ENCODE measurements at regions of chr6 and their contacts with region 1.

Region 1: DNA sequence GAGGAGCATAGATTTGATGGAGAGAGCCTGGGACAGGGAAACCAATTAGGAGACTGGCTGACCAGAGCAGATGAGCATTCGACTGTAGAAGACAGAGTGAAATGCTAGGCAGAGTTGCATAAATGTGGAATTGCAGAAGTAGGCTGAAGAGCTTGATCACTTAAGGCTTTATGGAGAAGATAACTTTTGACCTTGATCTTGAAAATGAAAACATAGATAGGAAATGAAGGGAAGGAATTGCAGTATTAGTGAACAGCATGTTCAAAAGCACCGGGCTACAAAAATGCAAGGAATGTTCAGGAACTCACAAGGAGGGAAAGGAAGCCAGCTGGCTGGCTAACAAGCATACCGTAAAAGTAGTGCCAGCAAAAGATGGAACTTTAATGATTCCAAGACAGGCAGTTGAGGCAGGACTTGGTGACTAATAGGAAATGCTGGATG is 20.5 kb upstream of the LTV1 start:
- DNase-seq: peak; percentile 93
- H3K4me3 ChIP-seq: no peak overlapping the region
- H3K27ac ChIP-seq: peak overlapping the region; percentile 93
- H3K4me1 ChIP-seq: peaks cover 54% of the 10 kb centered on the region
- H3K27me3 ChIP-seq: no peaks in the 10 kb centered on the region
- CTCF ChIP-seq: no peak
- POLR2A ChIP-seq: peak; percentile 57

Region 2: GRCh38 chr6:143677891-143678791 is 144.5 kb before region 1 on chr6 and contains the start of gene PHACTR2:
- CTCF ChIA-PET with region 1: interaction called, 3 read pairs
- POLR2A ChIA-PET with region 1: interaction called, 3 read pairs
- dilution Hi-C with region 1: no loop called
- intact Hi-C with region 1: loop called (anchors 1 kb)
- DNase-seq: peak; percentile 82
- H3K4me3 ChIP-seq: peak within 1 kb of the TSS; percentile 32 to 89 (median 80)
- H3K27ac ChIP-seq: peak within 1 kb of the TSS; percentile 91
- H3K4me1 ChIP-seq: peaks cover 38% of the 10 kb centered on the region
- H3K27me3 ChIP-seq: no peaks in the 10 kb centered on the region
- CTCF ChIP-seq: no peak
- POLR2A ChIP-seq: peak; percentile 94
- total RNA-seq, gene PHACTR2: 160 and 178 TPM in 2 replicates

Region 3: DNA sequence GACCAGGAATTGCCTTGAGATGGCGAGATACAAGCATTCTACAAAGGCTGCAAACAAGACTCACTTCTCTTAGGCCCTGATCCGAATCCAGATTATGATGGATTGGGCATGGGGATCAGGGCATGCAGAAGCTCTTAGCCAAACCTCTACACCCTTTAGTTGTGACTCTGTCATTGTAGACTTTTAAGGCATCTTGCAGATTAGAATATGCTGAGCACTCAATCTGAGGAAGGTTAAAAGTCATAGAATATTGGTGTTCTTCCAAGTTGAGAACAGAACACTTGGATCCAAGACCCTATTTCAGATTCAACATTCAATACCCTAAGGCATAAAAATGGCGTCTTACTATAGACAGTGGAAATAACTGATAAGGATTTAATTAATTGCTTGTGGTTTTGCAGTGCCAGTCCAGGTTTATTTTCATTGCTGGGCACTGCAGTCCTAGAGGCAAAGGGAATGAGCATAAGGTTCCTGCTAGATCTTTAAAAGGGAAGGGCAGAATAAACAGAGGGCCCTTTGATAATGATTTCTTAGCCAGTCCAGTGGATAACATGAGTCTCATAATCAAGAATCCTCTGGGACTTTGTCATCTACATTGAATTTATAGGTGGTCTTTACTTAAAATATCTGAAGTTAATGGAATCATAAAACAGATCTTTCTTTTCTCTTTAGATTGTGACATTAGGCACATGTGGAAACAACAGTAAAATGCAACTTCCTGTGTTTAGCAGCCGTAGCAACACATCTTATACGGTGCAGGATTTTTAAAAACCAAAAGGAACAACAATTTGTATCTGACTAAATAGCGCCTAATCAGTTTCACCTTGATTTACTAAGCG is 127.3 kb before region 1 on chr6:
- CTCF ChIA-PET with region 1: interaction called, 5 read pairs
- POLR2A ChIA-PET with region 1: no interaction called
- dilution Hi-C with region 1: no loop called
- intact Hi-C with region 1: loop called (anchors 1 kb)
- DNase-seq: peak; percentile 49
- H3K4me3 ChIP-seq: no peak overlapping the region
- H3K27ac ChIP-seq: peak overlapping the region; percentile 0
- H3K4me1 ChIP-seq: peaks cover 53% of the 10 kb centered on the region
- H3K27me3 ChIP-seq: no peaks in the 10 kb centered on the region
- CTCF ChIP-seq: no peak
- POLR2A ChIP-seq: no peak

Region 4: DNA sequence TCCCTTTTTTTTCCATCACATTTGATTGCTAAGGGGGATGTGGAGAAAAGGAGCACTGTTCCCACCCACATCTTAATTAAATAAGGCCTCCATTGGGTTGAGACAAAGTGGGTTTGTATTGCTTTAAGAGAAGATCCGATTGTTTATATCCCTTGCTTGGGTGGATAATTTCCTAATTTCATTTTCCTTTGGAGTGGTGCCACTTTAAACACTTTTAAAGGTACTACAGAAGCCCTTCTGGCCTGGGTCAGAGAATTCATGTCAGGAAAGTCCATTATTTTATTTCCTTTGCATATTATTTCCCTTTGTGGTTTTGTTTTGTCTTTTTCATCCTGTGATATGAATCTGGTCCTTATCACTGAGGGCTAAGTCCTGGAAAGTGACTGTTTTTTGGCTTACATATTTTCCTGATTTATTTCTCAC is 88.0 kb before region 1 on chr6:
- CTCF ChIA-PET with region 1: no interaction called
- POLR2A ChIA-PET with region 1: no interaction called
- dilution Hi-C with region 1: no loop called
- intact Hi-C with region 1: loop called (anchors 1 kb)
- DNase-seq: peak; percentile 82
- H3K4me3 ChIP-seq: no peak overlapping the region
- H3K27ac ChIP-seq: no peak overlapping the region
- H3K4me1 ChIP-seq: peaks cover 24% of the 10 kb centered on the region
- H3K27me3 ChIP-seq: no peaks in the 10 kb centered on the region
- CTCF ChIP-seq: no peak
- POLR2A ChIP-seq: peak; percentile 57

Region 5: DNA sequence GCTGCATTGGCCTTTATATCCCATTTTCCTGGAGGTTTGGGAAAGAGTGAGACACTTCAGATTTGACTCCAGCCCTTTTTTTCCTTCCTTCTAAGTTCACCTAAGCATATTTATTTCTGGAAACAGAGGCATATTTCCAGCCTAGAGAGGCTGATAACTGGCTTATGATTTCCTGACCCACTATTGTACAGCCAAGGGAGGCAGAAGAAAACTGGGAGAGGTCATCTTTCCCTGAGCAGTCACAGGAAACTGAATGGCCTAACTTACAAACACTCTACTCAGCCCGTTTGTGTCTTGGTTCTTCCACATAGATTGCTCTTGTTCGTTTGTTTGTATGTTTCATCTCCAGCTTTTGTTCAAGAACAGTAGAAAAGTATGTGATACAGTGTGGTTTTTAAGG is 43.7 kb before region 1 on chr6:
- CTCF ChIA-PET with region 1: interaction called, 3 read pairs
- POLR2A ChIA-PET with region 1: no interaction called
- dilution Hi-C with region 1: no loop called
- intact Hi-C with region 1: loop called (anchors 1 kb)
- DNase-seq: peak; percentile 67
- H3K4me3 ChIP-seq: no peak overlapping the region
- H3K27ac ChIP-seq: no peak overlapping the region
- H3K4me1 ChIP-seq: peaks cover 6% of the 10 kb centered on the region
- H3K27me3 ChIP-seq: no peaks in the 10 kb centered on the region
- CTCF ChIP-seq: no peak
- POLR2A ChIP-seq: no peak

Region 6: DNA sequence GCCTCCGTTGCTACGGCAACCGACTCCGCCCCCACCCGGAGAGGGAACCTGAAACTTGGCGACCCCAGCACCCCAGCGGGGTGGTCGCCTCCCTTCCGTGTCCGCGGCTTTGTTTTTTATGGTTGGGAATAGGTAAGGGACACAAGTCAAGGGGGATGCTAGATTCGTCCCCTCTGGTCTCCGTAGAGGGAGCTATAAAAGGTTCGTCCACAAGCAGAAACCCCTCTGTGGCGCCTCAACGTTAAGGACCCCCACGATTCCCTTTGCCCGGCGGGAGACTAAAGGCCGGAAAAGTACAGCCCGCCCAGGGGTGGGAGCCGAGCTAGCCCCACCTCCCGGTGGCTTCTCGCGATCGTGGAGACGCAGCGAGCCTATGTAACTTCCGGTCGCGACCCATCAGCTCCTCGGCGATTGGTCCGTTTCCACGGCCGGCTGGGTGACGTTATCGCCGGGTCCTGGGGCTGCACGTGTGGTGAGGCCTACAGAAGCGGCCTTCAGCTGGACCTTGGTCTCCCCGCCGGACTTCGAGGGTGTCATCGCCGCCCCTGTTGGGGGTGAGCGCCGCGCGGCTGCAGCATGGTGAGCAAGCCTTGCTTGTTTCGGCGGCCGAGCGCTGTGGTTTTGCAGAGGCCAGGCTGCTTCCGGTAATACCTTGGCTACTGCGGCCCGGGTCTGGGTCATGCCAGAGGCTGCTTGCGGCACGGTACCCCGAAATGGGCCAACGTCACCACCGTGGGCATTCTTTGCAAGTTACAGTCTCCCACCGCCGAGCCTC is 20.5 kb after region 1 on chr6 and contains the start of gene LTV1:
- CTCF ChIA-PET with region 1: interaction called, 6 read pairs
- POLR2A ChIA-PET with region 1: interaction called, 11 read pairs
- dilution Hi-C with region 1: no loop called
- intact Hi-C with region 1: loop called (anchors 1 kb)
- DNase-seq: peak; percentile 97
- H3K4me3 ChIP-seq: peak within 1 kb of the TSS; percentile 46 to 82 (median 49)
- H3K27ac ChIP-seq: peak within 1 kb of the TSS; percentile 90
- H3K4me1 ChIP-seq: peaks cover 9% of the 10 kb centered on the region
- H3K27me3 ChIP-seq: no peaks in the 10 kb centered on the region
- CTCF ChIP-seq: no peak
- POLR2A ChIP-seq: peak; percentile 92
- total RNA-seq, gene LTV1: 26.6 and 26.9 TPM in 2 replicates